ENCODE measurements at regions of chr10 and their contacts with region 1.

Region 1: GRCh38 chr10:61151059-61151458 is 207.1 kb upstream of the RHOBTB1 start:
- DNase-seq: no peak
- H3K4me3 ChIP-seq: no peak overlapping the region
- H3K27me3 ChIP-seq: no peaks in the 10 kb centered on the region
- CTCF ChIP-seq: no peak

Region 2: DNA sequence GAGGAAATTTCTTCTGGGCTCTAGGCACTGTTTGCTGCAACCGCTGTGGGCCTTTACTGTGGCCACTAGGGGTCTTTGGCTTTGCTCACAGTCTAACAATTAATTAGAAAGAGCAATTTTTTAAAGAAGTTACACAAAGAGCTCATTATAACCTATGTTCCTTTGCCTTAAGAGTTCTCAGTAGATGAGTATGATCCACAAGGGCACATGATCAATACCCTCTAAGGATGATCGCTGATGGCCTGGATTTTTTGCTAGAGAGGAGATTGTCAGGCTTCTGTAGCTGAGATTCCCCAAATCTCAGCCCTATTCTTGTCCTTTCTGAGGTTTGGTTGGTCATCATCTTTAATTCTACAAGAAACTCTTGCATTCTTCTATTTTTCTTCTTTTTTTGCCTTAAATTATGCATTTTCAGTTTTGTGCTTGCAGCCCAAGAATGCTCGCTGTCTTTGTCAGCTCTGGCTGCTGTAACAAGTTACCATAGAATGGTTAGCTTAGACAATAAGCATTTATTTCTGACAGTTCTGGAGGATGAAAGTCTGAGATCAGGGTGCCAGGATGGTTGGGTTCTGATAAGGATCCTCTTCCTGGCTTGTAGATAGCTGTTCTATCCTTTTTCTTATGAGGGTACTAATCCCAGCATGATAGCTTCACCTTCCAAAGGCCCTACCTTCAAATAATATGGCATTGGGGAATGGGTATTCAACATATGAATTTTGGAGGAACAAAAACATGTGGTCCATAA is 126.0 kb before region 1 on chr10:
- CTCF ChIA-PET with region 1: no interaction called
- POLR2A ChIA-PET with region 1: no interaction called
- DNase-seq: no peak
- H3K4me3 ChIP-seq: no peak overlapping the region
- H3K27me3 ChIP-seq: peaks cover 3% of the 10 kb centered on the region; the same call in 1 of the 2 replicates
- CTCF ChIP-seq: peak; percentile 69

Region 3: GRCh38 chr10:61097026-61097425 is 54.0 kb before region 1 on chr10:
- CTCF ChIA-PET with region 1: no interaction called
- POLR2A ChIA-PET with region 1: no interaction called
- DNase-seq: no peak
- H3K4me3 ChIP-seq: no peak overlapping the region
- H3K27me3 ChIP-seq: peaks cover 3% of the 10 kb centered on the region; the same call in 1 of the 2 replicates
- CTCF ChIP-seq: no peak

Region 4: DNA sequence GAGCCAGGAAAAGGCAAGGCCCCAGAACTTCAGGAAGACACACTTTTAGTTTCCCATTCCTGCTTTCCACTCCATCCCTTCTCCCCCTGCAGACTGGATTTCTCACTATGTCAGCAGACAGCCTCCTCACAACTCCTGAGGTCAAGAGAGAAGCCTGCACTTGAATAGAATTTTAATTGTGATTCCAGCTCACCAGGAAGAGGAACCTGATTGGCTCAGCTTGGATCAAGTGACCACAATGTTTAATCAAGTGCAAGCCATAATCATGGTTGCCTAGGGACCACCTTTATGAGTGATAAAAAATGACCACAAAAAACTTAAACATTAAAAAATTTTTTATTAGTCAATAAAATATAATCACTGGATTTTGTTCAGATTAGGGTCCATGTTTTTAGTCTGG is 37.6 kb after region 1 on chr10:
- CTCF ChIA-PET with region 1: interaction called, 14 read pairs
- POLR2A ChIA-PET with region 1: no interaction called
- DNase-seq: no peak
- H3K4me3 ChIP-seq: no peak overlapping the region
- H3K27me3 ChIP-seq: no peaks in the 10 kb centered on the region; the same call in 1 of the 2 replicates
- CTCF ChIP-seq: no peak